ENCODE measurements at regions of chr16 and their contacts with region 1.

Region 1: DNA sequence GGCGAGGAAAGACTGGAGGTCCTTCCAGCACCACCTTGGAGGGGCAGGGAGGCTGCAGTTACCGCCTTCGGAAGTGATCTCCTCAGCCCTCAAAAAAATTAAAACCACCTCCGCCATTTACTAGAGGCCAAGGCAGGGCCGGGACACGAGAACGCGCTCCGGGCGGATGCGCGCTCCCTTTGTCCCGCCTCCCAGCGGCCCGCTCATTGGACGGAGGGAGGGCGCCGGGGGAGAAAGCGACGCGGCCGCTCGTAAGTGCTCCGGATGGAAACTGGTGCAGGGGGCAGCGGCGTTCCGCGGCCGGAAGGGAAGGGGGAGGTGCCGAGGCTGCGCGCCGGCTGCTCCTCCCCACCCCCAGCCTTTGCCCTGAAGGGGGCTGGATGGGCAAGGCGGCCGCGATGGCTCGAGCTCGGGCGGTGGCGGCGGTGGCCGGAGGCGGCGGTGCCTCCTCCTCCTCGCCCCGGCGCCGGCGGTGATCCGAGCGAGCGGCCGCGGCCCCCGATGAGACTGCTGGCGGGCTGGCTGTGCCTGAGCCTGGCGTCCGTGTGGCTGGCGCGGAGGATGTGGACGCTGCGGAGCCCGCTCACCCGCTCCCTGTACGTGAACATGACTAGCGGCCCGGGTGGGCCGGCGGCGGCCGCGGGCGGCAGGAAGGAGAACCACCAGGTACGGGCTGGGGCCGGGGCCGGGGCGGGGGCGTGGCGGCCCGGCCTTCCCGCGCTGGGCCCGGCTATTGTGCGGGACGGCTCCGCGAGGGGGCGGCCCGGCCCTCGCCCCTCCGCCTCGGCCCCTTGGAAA is at the start of gene METTL9:
- DNase-seq: peak; percentile 95 to 97 (median 96)
- ATAC-seq: peak; percentile 92
- H3K4me3 ChIP-seq: peak within 1 kb of the TSS; percentile 88
- H3K27ac ChIP-seq: peak within 1 kb of the TSS; percentile 82
- H3K4me1 ChIP-seq: peaks cover 14 to 15% of the 10 kb centered on the region in 2 experiments; a peak in 4 of 5 replicates
- H3K27me3 ChIP-seq: no peaks in the 10 kb centered on the region
- CTCF ChIP-seq: no peak
- EP300 ChIP-seq: no peak
- POLR2A ChIP-seq: peak; percentile 96
- RAD21 ChIP-seq: no peak
- polyA plus RNA-seq, gene METTL9: 12.2 to 16.3 TPM

Region 2: DNA sequence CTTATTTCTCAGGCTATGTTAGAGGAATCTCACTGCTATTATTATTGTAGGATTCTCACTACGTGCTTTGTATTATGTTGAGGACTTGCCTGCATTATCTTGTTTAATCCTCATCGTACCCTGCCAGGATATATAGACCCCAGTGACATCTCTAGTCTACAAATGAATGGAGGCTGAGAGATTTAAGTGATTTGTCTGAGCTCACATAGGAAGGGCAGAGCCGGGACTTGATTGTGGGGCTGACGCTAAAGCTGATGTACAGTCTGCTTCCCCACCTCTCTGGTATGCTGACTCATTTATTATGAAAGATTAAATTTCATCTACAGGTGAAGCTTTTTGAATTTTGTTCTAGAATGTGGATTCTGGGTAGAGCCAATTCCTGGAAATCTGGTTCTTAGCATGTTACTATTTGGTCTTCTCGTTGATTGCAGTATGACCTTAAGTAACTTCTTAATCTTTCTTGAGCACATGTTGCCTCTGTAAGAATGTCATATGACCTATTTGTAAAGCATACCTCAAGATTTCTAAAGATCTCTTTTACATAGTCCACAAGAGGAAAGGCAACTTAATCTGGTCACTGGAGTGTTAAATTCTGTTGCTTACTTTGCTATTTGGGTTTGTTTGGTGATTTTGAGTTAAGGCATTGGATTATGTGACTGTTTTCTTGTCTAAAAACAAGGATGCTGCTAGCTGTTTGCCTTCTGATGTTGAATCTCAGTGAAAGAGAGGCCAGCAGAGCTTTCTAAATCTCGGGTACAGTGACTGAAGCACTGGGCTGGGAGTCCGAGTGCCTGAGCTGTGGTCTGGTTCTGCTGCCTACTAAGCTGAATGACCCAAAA is 12.3 kb after region 1 on chr16:
- CTCF ChIA-PET with region 1: no interaction called
- POLR2A ChIA-PET with region 1: interaction called, 14 read pairs
- in situ Hi-C with region 1: no loop called
- intact Hi-C with region 1: no loop called
- DNase-seq: peak; percentile 23 to 75 (median 31)
- ATAC-seq: peak; percentile 85
- H3K4me3 ChIP-seq: no peak overlapping the region
- H3K27ac ChIP-seq: peak overlapping the region; percentile 31; the same call in 1 of the 3 replicates
- H3K4me1 ChIP-seq: peaks cover 13 to 50% of the 10 kb centered on the region in 2 experiments
- H3K27me3 ChIP-seq: no peaks in the 10 kb centered on the region
- CTCF ChIP-seq: no peak
- EP300 ChIP-seq: peak; percentile 93
- POLR2A ChIP-seq: no peak
- RAD21 ChIP-seq: no peak